Breast epithelium (tissue), 4 donors: ENCODE measurements at regions of chr18 and their contacts with region 1.

Region 1: DNA sequence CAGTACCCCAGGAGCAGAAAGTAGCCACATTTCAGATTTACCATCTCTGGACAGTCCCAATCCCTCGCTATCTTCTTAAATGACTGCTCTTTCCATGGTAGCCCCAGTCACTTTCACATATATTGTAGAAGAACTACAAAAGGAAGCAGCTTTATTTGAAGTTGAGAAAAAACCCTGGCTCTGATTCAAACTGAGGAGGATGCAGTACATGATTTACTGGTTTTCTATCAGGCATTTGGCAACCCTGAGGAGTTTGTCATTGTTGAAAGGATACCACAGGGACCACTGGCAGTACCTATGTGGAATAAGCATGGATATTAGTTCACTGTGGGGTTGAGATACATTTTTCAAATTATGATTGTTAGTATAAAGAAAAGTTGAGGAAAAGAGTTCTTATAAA is 640.9 kb upstream of the SETBP1 start:
- DNase-seq: no peak
- H3K4me3 ChIP-seq: no peak overlapping the region
- H3K27ac ChIP-seq: no peak overlapping the region
- H3K4me1 ChIP-seq: no peaks in the 10 kb centered on the region
- H3K27me3 ChIP-seq: no peaks in the 10 kb centered on the region
- CTCF ChIP-seq: no peak
- POLR2A ChIP-seq: no peak

Region 2: GRCh38 chr18:42426496-42427015 is 1613.3 kb before region 1 on chr18:
- intact Hi-C with region 1: loop called (anchors 10 kb)
- DNase-seq: no peak
- H3K4me3 ChIP-seq: no peak overlapping the region
- H3K27ac ChIP-seq: no peak overlapping the region
- H3K4me1 ChIP-seq: no peaks in the 10 kb centered on the region
- H3K27me3 ChIP-seq: no peaks in the 10 kb centered on the region
- CTCF ChIP-seq: no peak
- POLR2A ChIP-seq: no peak